Breast epithelium (tissue), 4 donors: ENCODE measurements at regions of chr6 and their contacts with region 1.

Region 1: GRCh38 chr6:101477436-101477835 is 83.9 kb downstream of the GRIK2 start:
- DNase-seq: no peak
- H3K4me3 ChIP-seq: no peak overlapping the region
- H3K27ac ChIP-seq: no peak overlapping the region
- H3K4me1 ChIP-seq: no peaks in the 10 kb centered on the region
- H3K27me3 ChIP-seq: no peaks in the 10 kb centered on the region
- CTCF ChIP-seq: no peak
- POLR2A ChIP-seq: no peak

Region 2: GRCh38 chr6:101417900-101418299 is 59.5 kb before region 1 on chr6:
- intact Hi-C with region 1: no loop called
- DNase-seq: no peak
- H3K4me3 ChIP-seq: no peak overlapping the region
- H3K27ac ChIP-seq: no peak overlapping the region
- H3K4me1 ChIP-seq: no peaks in the 10 kb centered on the region
- H3K27me3 ChIP-seq: no peaks in the 10 kb centered on the region
- CTCF ChIP-seq: no peak
- POLR2A ChIP-seq: no peak

Region 3: GRCh38 chr6:101502818-101503217 is 25.4 kb after region 1 on chr6:
- intact Hi-C with region 1: loop called (anchors 2 kb)
- DNase-seq: no peak
- H3K4me3 ChIP-seq: no peak overlapping the region
- H3K27ac ChIP-seq: no peak overlapping the region
- H3K4me1 ChIP-seq: no peaks in the 10 kb centered on the region
- H3K27me3 ChIP-seq: no peaks in the 10 kb centered on the region
- CTCF ChIP-seq: no peak
- POLR2A ChIP-seq: no peak

Region 4: GRCh38 chr6:102488729-102489128 is 1011.3 kb after region 1 on chr6:
- intact Hi-C with region 1: no loop called
- DNase-seq: no peak
- H3K4me3 ChIP-seq: no peak overlapping the region
- H3K27ac ChIP-seq: no peak overlapping the region
- H3K4me1 ChIP-seq: no peaks in the 10 kb centered on the region
- H3K27me3 ChIP-seq: no peaks in the 10 kb centered on the region
- CTCF ChIP-seq: no peak
- POLR2A ChIP-seq: no peak